OCI-LY7 (cell line): ENCODE measurements at regions of chr7 and their contacts with region 1.

Region 1: GRCh38 chr7:150378853-150379440 is at the start of gene ZNF775:
- DNase-seq: peak; percentile 95
- H3K4me3 ChIP-seq: peak within 1 kb of the TSS; percentile 93
- H3K27ac ChIP-seq: peak within 1 kb of the TSS; percentile 24
- H3K4me1 ChIP-seq: peaks cover 72% of the 10 kb centered on the region
- CTCF ChIP-seq: no peak
- total RNA-seq, gene ZNF775: 4.7 and 5.5 TPM in 2 replicates

Region 2: GRCh38 chr7:149861446-149862045 is 517.4 kb before region 1 on chr7:
- CTCF ChIA-PET with region 1: no interaction called
- POLR2A ChIA-PET with region 1: no interaction called
- intact Hi-C with region 1: loop called (anchors 10 kb)
- DNase-seq: no peak
- H3K4me3 ChIP-seq: no peak overlapping the region
- H3K27ac ChIP-seq: no peak overlapping the region
- H3K4me1 ChIP-seq: peaks cover 17% of the 10 kb centered on the region
- CTCF ChIP-seq: peak; percentile 51

Region 3: DNA sequence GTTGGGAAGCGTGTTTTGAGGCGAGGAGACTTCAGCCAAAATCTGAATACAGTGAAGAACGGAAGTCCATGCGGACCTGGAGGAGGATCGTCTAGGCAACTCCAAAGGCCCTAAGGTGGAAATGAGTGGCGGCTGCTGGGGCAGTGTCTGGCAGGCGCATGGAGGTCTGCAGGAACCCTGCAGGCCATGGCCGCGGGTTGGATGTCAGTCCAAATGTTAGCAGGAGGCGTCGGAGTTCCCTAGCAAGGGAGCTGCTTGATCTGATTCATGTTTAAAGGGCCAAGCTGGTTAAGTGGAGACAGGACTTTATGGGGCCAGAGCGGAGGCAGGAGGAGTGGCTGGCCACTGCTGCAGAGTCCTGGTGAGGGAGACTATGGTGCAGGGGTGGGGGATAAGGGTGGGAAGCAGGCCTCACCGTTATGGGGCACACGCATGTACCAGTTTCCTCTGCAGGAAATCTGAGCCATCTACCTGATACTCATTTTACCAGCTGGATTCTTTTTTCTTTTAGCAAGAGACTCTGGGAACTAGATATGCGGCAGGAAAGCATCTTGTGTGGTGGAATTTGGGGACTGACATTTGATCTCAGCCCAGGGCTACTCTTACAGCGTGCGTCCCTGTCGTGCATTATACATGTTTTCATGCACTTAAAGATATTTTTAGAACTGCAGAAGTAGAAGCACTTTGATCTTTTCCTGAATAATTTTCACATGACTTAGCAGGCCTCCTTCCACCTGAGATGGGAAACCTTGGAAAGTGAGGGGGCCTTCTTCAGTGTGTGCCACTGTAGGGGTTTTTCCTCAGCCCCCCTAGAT is 16.9 kb before region 1 on chr7:
- CTCF ChIA-PET with region 1: interaction called, 10 read pairs
- POLR2A ChIA-PET with region 1: interaction called, 11 read pairs
- intact Hi-C with region 1: no loop called
- DNase-seq: no peak
- H3K4me3 ChIP-seq: no peak overlapping the region
- H3K27ac ChIP-seq: no peak overlapping the region
- H3K4me1 ChIP-seq: peaks cover 40% of the 10 kb centered on the region
- CTCF ChIP-seq: no peak

Region 4: DNA sequence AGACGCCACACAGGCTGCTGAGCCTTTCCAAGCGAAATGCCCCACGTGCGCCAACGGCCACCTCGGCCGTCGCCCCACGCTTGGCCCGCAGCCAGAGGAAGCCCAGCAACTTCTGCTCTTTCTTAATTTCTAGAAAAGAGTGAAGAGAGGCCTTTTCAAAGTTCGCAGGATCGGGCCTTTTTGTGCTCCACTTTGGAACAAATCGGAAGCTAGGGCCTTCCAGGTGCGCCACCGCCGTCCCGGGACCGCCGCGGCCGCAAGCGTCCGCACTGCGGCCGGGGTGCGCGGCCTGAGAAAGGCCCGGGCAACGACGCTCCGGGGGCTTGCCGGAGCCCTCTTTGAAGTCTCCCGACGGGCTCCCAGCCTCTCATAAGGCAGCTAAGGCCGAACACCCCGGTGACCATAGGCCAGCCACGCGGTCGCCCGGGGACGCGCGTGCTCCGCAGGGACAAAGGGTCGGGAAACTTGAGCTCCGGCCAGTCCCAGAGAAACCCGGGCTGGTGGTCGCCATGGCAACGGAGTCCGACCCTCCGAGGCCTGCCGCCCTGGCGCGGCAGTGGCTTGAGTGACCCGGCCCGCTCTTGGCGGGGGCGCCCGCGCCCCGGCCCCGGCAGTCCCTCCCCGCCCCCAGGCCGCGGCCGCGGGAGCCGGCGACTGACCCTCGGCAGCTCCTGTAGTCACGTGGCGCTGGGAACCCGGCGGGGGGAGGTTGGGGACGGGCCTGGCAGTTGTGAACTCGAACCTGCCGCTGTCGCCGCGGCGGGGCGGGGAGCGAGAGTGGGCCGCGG is 10.7 kb before region 1 on chr7 and contains the start of gene REPIN1:
- CTCF ChIA-PET with region 1: interaction called, 3 read pairs
- POLR2A ChIA-PET with region 1: interaction called, 14 read pairs
- intact Hi-C with region 1: no loop called
- DNase-seq: peak; percentile 80
- H3K4me3 ChIP-seq: peak within 1 kb of the TSS; percentile 87
- H3K27ac ChIP-seq: peak within 1 kb of the TSS; percentile 39
- H3K4me1 ChIP-seq: peaks cover 68% of the 10 kb centered on the region
- CTCF ChIP-seq: no peak
- total RNA-seq, gene REPIN1: 36.9 and 46.2 TPM in 2 replicates

Region 5: DNA sequence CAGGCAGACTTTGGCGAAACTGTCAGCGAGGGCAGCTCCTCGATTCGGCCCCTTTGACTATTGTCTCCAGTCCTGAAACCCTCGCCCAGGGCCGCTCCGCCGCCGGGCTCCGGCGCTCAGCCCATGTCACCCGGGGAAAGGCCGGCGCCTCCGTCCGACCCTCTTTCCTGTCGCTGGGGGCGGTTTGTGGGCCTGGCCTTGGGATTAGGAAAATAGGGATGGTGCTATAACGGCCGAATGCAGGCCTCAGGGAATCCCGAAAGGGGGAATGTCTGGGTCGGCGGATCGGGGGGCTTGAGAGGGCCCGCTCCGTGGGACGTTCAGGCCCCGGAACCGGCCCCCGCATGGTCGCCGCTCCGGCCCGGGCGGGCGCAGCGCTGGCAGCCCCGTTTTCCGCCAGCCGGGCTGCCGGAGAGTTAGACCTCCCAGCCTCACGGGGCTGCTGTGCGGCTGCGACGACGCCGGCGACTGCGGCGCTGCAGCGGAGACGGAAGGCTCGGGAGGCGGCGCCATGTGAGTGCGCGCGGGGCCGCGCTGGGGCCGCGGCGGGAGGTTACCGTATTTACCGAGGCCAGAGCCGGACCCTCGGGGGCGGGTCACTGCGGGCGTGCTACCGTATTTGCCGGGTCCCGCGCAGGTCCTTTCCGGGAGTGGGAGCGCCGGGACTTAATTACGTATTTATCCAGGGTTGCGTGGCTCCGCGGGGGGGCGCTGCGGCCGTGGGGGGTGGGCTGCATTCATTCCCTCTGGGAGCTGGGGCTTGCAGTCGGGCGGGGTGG is 26.0 kb after region 1 on chr7:
- CTCF ChIA-PET with region 1: interaction called, 5 read pairs
- POLR2A ChIA-PET with region 1: interaction called, 16 read pairs
- intact Hi-C with region 1: loop called (anchors 1 kb)
- DNase-seq: peak; percentile 90
- H3K4me3 ChIP-seq: peak overlapping the region; percentile 80
- H3K27ac ChIP-seq: peak overlapping the region; percentile 89
- H3K4me1 ChIP-seq: peaks cover 40% of the 10 kb centered on the region
- CTCF ChIP-seq: peak; percentile 62

Region 6: GRCh38 chr7:150631866-150632864 is 253.2 kb after region 1 on chr7 and contains the start of gene GIMAP6:
- CTCF ChIA-PET with region 1: no interaction called
- POLR2A ChIA-PET with region 1: no interaction called
- intact Hi-C with region 1: no loop called
- DNase-seq: no peak
- H3K4me3 ChIP-seq: no peak within 1 kb of the TSS
- H3K27ac ChIP-seq: no peak within 1 kb of the TSS
- H3K4me1 ChIP-seq: no peaks in the 10 kb centered on the region
- CTCF ChIP-seq: no peak
- total RNA-seq, gene GIMAP6: not detected in 2 replicates

Region 7: GRCh38 chr7:150974468-150975391 is 595.8 kb after region 1 on chr7:
- CTCF ChIA-PET with region 1: no interaction called
- POLR2A ChIA-PET with region 1: no interaction called
- intact Hi-C with region 1: loop called (anchors 10 kb)
- DNase-seq: peak; percentile 92
- H3K4me3 ChIP-seq: peak overlapping the region; percentile 72
- H3K27ac ChIP-seq: peak overlapping the region; percentile 84
- H3K4me1 ChIP-seq: peaks cover 64% of the 10 kb centered on the region
- CTCF ChIP-seq: peak; percentile 67